Ascending aorta (tissue), 2 donors: ENCODE measurements at regions of chr1 and their contacts with region 1.

Region 1: GRCh38 chr1:155562581-155563376 is at the start of gene ASH1L:
- DNase-seq: peak; percentile 66 to 93
- H3K4me3 ChIP-seq: peak within 1 kb of the TSS; percentile 87 to 91
- H3K27ac ChIP-seq: peak within 1 kb of the TSS; percentile 97 to 99
- H3K4me1 ChIP-seq: peaks cover 6 to 25% of the 10 kb centered on the region in 2 donors
- H3K27me3 ChIP-seq: no peaks in the 10 kb centered on the region
- CTCF ChIP-seq: peak in 1 of 3 experiments; percentile 22
- total RNA-seq, gene ASH1L: 16.2 TPM

Region 2: DNA sequence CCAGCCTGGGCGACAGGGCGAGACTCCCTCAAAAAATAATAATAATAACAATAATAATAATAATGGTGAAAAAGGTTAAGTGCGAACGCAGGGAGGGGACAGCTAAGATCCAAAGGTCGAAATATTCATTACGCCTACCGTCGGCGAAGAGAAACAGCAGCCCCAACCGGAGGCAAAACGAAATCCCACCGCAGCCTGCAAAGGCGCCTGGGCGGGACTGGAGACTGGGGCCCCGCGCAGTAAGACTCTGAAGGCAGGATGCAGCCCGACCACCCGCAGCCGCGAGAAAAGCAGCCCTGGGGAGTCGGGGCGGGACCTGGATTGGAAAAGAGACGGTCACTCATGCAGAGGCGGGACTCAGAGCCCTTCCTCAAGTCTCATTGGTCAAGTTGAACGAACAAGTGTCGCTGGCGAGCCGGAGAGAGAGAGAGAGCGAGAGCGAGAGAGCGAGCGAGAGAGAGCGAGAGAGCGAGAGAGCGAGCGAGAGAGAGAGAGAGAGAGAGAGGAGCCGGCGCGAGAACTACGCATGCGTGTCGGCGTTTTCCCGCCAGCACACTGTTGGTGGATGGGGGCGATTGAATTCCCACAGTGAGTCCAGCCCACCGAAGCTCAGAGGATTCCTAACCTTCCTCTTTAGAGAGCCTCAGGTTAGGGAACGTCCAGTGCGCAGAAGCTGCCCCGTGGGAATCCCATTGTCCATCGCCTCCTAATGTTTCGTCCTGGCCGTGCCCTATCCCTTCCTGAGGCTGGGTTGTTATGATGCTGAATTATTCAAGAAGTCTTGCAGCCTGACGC is 318.2 kb before region 1 on chr1:
- intact Hi-C with region 1: loop called (anchors 1 kb)
- DNase-seq: peak; percentile 97 to 99
- H3K4me3 ChIP-seq: peak overlapping the region; percentile 69 to 80
- H3K27ac ChIP-seq: peak overlapping the region; percentile 83 to 92
- H3K4me1 ChIP-seq: peaks cover 3 to 28% of the 10 kb centered on the region in 2 donors
- H3K27me3 ChIP-seq: no peaks in the 10 kb centered on the region
- CTCF ChIP-seq: peak; percentile 27 to 99 (median 58)

Region 3: DNA sequence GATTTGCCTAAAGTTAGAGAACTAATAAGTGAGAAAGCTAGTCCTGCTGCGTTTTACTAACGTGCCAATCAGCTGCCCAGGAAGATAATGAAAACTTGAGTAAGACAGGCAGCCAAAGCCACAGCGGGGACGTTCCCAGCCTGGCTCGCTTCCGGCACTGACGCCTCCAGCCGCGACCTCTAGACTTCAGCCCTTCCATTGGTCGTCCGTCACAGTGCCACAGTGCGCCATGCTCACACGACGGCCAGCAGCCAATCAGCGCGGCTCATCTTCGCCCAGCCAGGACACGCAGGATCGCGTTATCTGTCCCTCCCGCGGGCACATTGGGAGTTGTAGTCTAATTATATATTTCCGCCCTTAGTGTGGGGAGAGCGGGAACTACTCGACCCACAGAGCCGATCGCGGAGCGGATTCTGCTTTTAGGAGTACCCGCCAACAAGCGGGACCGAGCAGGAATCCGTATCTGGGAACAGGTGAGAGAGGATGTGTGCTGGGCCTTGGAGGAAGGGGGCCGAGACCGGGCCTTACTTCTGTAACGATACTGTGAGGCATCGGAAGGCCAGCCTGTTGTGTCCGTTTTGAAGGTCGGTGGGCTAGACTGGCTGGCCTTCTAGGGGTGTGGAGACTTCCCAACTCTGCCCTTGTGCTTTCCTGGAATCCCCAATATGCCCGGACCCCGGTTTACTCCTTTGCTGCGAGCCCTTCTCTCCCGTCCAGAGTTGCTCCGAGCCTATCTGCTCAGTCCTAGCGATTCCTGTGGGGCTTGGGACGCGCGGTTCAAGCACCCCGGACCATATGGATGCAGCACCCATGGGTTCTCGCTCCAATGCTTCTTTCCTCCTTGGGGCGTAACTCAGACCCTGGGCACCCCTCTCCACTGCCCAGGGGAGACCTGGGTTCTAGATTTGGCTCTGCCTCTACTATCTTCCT is 254.0 kb before region 1 on chr1 and contains the start of gene FDPS:
- intact Hi-C with region 1: loop called (anchors 1 kb)
- DNase-seq: peak; percentile 98 to 100
- H3K4me3 ChIP-seq: peak within 1 kb of the TSS; percentile 70 to 77
- H3K27ac ChIP-seq: peak within 1 kb of the TSS; percentile 87
- H3K4me1 ChIP-seq: peaks cover 6 to 9% of the 10 kb centered on the region in 2 donors
- H3K27me3 ChIP-seq: no peaks in the 10 kb centered on the region
- CTCF ChIP-seq: peak in 1 of 3 experiments; percentile 23
- total RNA-seq, gene FDPS: 51.7 TPM

Region 4: DNA sequence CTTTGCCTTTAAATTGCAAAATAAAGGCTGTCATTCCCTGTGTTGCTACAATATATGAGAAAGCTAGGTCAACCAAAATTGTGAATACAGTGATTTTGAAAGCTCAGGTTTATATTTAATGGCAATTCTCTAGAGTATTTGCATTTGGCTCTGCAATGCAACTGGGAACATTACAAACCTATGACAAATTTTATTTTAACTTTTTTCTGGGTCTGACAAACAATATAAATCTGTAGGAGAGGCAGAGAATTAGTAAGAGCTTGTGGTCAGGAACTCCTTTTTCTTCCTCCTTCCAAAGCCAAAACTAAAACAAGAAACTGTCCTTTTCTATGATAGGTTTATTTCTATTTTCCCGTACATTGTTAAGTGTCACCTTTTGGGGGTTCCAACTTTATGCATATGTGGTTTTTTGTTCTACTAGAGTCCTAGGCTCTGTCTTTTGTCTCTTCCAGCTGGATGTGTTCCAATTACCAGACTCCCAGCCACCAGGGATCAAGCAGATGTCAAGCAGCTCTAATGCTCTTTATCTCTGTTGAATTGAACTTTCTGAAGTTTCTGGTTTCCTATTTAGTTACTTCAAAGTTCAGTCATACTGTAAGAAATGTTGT is 107.1 kb before region 1 on chr1:
- intact Hi-C with region 1: no loop called
- DNase-seq: no peak
- H3K4me3 ChIP-seq: no peak overlapping the region
- H3K27ac ChIP-seq: no peak overlapping the region
- H3K4me1 ChIP-seq: no peaks in the 10 kb centered on the region
- H3K27me3 ChIP-seq: no peaks in the 10 kb centered on the region
- CTCF ChIP-seq: no peak

Region 5: GRCh38 chr1:155466996-155467395 is 95.8 kb before region 1 on chr1:
- intact Hi-C with region 1: loop called (anchors 5 kb)
- DNase-seq: no peak
- H3K4me3 ChIP-seq: no peak overlapping the region
- H3K27ac ChIP-seq: no peak overlapping the region
- H3K4me1 ChIP-seq: peaks cover 0 to 25% of the 10 kb centered on the region in 2 donors
- H3K27me3 ChIP-seq: no peaks in the 10 kb centered on the region
- CTCF ChIP-seq: no peak